ENCODE measurements at regions of chr9 and their contacts with region 1.

Region 1: GRCh38 chr9:9603345-9603744 is 1009.5 kb downstream of the PTPRD start:
- DNase-seq: no peak
- ATAC-seq: peak; percentile 23
- H3K4me3 ChIP-seq: no peak overlapping the region
- H3K4me1 ChIP-seq: no peaks in the 10 kb centered on the region
- CTCF ChIP-seq: no peak

Region 2: GRCh38 chr9:9790216-9790872 is 187.0 kb after region 1 on chr9:
- intact Hi-C with region 1: loop called (anchors 5 kb)
- DNase-seq: peak in 1 of 3 donors; percentile 40
- ATAC-seq: no peak
- H3K4me3 ChIP-seq: no peak overlapping the region
- H3K4me1 ChIP-seq: no peaks in the 10 kb centered on the region
- CTCF ChIP-seq: no peak

Region 3: DNA sequence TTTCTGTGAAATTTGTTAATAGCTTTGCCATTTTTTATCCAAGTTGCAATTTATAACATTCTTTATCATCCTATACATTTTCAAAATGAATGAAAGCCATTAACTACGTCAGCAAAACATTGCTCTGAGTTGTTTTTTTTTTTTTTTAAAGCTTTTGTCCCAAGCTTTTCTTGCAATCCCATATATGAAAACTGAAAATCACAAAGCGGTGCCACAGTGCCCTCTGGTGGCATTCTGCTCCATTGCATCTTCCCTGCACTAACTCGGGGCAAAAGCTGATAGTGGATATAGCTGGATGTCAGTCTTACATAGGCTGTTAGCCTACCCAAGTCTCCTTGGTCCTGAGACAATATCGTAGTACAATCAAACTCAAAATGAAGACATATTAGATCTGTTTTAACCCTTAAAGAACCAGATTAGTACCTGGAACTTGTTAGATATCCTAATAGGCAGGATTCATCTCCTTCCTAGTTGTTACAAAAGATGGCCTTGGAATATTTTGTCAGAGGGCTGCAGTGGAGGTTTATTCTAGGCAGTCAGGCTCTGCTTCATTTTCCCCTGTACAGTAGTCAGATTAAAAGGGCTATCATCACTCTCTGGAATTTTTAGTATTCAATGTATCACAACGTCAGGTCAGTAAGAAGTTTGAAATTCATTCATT is 339.5 kb after region 1 on chr9:
- intact Hi-C with region 1: loop called in 1 of 2 experiments (anchors 10 kb)
- DNase-seq: peak in 2 of 3 donors; percentile 68 to 72
- ATAC-seq: peak; percentile 87
- H3K4me3 ChIP-seq: no peak overlapping the region
- H3K4me1 ChIP-seq: no peaks in the 10 kb centered on the region
- CTCF ChIP-seq: peak; percentile 88